Aorta (tissue), 5 donors: ENCODE measurements at regions of chr13 and their contacts with region 1.

Region 1: GRCh38 chr13:113393563-113394338 is 29.8 kb upstream of the GRTP1 start:
- DNase-seq: peak; percentile 87 to 93
- ATAC-seq: peak; percentile 95
- H3K4me3 ChIP-seq: peak overlapping the region; percentile 38 to 41
- H3K27ac ChIP-seq: no peak overlapping the region
- H3K4me1 ChIP-seq: no peaks in the 10 kb centered on the region
- H3K27me3 ChIP-seq: no peaks in the 10 kb centered on the region

Region 2: GRCh38 chr13:113275387-113275786 is 118.4 kb before region 1 on chr13:
- intact Hi-C with region 1: loop called (anchors 5 kb)
- DNase-seq: no peak
- ATAC-seq: peak; percentile 36
- H3K4me3 ChIP-seq: no peak overlapping the region
- H3K27ac ChIP-seq: no peak overlapping the region
- H3K4me1 ChIP-seq: no peaks in the 10 kb centered on the region
- H3K27me3 ChIP-seq: no peaks in the 10 kb centered on the region

Region 3: DNA sequence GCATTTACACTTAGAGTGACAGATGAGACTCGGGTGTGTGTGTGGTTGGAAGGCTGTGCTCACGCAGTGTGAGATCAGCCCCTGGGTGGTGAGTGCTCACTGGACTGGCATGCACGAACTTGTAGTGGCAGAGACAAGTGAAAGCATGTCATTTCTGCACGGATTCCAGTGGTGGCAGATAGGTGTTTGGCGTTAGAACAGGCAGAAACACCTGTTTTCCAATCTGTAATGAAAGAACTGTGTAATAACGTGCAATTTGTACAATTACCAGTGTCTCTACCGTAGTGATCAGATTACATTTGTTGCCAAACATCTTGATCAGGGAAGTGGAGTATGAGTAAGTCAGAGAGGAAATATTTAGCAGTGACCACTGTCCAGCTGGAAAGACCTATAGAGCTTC is 88.5 kb before region 1 on chr13:
- intact Hi-C with region 1: no loop called
- DNase-seq: no peak
- ATAC-seq: no peak
- H3K4me3 ChIP-seq: no peak overlapping the region
- H3K27ac ChIP-seq: no peak overlapping the region
- H3K4me1 ChIP-seq: no peaks in the 10 kb centered on the region
- H3K27me3 ChIP-seq: no peaks in the 10 kb centered on the region